ENCODE measurements at regions of chr6 and their contacts with region 1.

Region 1: GRCh38 chr6:46170357-46171289 is at the start of gene ENPP5:
- DNase-seq: no peak
- H3K4me3 Mint-ChIP-seq: peak within 1 kb of the TSS; percentile 67
- H3K27ac Mint-ChIP-seq: no peak within 1 kb of the TSS
- H3K4me1 Mint-ChIP-seq: peaks cover 27% of the 10 kb centered on the region
- H3K27me3 Mint-ChIP-seq: peaks cover 71% of the 10 kb centered on the region
- total RNA-seq, gene ENPP5: not detected in 2 replicates

Region 2: GRCh38 chr6:45001663-45002062 is 1169.0 kb before region 1 on chr6:
- intact Hi-C with region 1: loop called (anchors 10 kb)
- DNase-seq: peak; percentile 8
- H3K4me3 Mint-ChIP-seq: peak overlapping the region; percentile 54
- H3K27ac Mint-ChIP-seq: peak overlapping the region; percentile 73
- H3K4me1 Mint-ChIP-seq: peaks cover 32% of the 10 kb centered on the region
- H3K27me3 Mint-ChIP-seq: no peaks in the 10 kb centered on the region

Region 3: GRCh38 chr6:46129629-46130511 is 40.8 kb before region 1 on chr6 and contains the start of gene ENPP4:
- intact Hi-C with region 1: loop called (anchors 1 kb)
- DNase-seq: peak; percentile 92
- H3K4me3 Mint-ChIP-seq: peak within 1 kb of the TSS; percentile 91
- H3K27ac Mint-ChIP-seq: peak within 1 kb of the TSS; percentile 75
- H3K4me1 Mint-ChIP-seq: peaks cover 25% of the 10 kb centered on the region
- H3K27me3 Mint-ChIP-seq: peaks cover 2% of the 10 kb centered on the region
- total RNA-seq, gene ENPP4: 5.9 and 6.1 TPM in 2 replicates

Region 4: DNA sequence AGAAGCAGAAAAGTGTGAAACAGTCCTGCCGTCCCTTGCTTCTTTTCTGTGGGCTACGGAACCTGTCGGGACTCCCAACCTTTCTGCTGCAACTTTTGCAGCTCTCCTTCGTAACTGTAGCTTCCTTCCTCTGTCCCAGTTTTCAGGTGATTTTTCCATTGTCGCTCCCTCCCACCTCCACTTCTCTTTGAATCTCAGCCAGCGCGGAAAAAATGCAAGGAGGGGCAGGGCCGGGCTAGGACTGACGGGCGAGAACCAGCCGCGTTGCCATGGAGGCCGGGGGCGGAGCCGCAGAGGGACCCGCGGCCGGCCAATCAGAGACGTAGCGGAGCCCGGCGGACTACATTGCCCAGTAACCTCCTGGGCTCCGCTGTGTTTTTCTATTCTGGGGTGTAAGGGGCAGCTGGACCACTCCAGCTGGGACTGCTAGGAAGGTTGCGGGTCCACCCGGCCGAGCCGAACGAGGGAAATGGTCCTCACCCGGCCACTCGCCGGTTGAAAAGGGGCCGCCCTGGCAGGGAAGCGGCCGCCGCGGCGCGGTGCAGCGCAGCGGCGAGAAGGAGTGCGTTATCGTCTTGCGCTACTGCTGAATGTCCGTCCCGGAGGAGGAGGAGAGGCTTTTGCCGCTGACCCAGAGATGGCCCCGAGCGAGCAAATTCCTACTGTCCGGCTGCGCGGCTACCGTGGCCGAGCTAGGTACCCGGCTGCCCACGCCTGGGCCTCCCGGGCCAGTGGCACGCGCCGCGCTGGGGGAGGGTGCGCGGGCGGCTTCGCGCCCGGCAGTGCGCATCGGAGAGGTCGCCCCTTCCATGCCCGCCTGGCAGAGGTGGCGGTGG is 482.2 kb after region 1 on chr6 and contains the starts of genes CYP39A1 and SLC25A27:
- intact Hi-C with region 1: loop called (anchors 2 kb)
- DNase-seq: peak; percentile 75
- H3K4me3 Mint-ChIP-seq: peak within 1 kb of the TSS; percentile 87
- H3K27ac Mint-ChIP-seq: peak within 1 kb of the TSS; percentile 35
- H3K4me1 Mint-ChIP-seq: peaks cover 11% of the 10 kb centered on the region
- H3K27me3 Mint-ChIP-seq: peaks cover 47% of the 10 kb centered on the region
- total RNA-seq, gene CYP39A1: not detected in 2 replicates
- total RNA-seq, gene SLC25A27: not detected in 2 replicates